ENCODE measurements at regions of chr1 and their contacts with region 1.

Region 1: DNA sequence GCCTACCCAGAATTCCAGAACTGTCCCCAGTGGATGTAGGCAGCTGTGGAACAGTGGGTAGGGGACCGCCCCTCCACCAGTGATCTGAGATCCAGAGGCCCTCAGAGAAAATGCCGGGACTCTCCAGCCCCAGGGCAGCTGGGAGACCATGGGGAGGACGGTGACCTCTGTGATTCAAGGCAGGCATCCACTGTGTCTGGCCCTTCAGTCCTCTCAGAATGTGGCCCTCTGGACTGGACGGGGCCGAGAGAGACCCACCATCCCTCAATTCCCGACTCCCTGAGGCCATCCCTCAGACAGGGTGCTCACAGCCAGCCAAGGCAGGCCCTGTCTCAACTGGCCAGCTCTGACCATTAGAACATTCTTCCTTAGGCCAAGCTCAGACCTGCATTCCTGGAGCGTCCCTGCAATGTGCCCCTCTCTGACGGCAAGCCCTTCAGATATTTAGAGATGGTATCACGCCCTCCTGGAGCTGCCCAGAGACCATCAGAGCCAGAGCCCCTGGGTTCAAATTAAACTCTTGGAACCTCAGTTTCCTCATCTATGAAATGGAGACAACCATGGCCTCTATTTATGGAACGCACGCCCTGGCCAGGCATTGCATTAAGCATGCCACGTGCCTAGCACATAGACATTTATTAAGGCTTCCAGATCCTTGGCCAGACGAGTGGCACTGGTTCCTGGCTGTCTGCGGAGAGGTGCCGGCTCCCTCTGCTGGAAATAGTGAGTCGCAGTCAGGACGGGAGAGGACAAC is 9.6 kb upstream of the EPS8L3 start:
- DNase-seq: peak; percentile 78 to 82
- H3K4me3 ChIP-seq: no peak overlapping the region
- H3K27ac ChIP-seq: no peak overlapping the region
- H3K4me1 ChIP-seq: peaks cover 46% of the 10 kb centered on the region
- H3K27me3 ChIP-seq: no peaks in the 10 kb centered on the region
- CTCF ChIP-seq: peak; percentile 97

Region 2: GRCh38 chr1:109643385-109644230 is 129.7 kb before region 1 on chr1:
- CTCF ChIA-PET with region 1: interaction called, 48 read pairs
- POLR2A ChIA-PET with region 1: no interaction called
- intact Hi-C with region 1: loop called (anchors 2 kb)
- DNase-seq: peak; percentile 78 to 85
- H3K4me3 ChIP-seq: peak overlapping the region; percentile 38; the same call in 1 of the 2 replicates
- H3K27ac ChIP-seq: no peak overlapping the region
- H3K4me1 ChIP-seq: peaks cover 10% of the 10 kb centered on the region
- H3K27me3 ChIP-seq: no peaks in the 10 kb centered on the region
- CTCF ChIP-seq: peak; percentile 96

Region 3: DNA sequence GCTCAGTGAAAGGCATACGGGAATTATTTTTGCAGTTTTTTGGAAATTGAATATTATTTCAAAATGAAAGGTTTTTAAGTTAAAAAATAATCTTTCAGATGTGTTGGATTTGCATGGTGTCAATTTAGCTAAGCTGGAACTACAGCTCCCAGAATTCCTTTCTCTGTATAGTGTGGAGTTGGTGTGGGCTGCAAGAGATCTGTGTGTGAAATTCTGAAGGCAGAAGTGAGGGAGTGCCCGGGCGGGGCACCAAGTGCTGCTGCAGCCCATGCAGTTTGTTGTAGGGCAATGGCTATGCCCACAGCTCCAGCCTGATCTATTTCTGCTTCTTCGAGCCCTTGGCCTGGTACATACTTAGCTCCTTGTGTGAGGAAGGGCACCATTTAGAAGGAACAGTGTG is 76.9 kb after region 1 on chr1:
- CTCF ChIA-PET with region 1: no interaction called
- POLR2A ChIA-PET with region 1: no interaction called
- intact Hi-C with region 1: loop called (anchors 2 kb)
- DNase-seq: no peak
- H3K4me3 ChIP-seq: no peak overlapping the region
- H3K27ac ChIP-seq: 0 out of 2 replicates have a peak overlapping the region, but pooled peaks have one; percentile 0
- H3K4me1 ChIP-seq: peaks cover 31% of the 10 kb centered on the region
- H3K27me3 ChIP-seq: no peaks in the 10 kb centered on the region
- CTCF ChIP-seq: no peak

Region 4: GRCh38 chr1:109959974-109960744 is 186.8 kb after region 1 on chr1:
- CTCF ChIA-PET with region 1: no interaction called
- POLR2A ChIA-PET with region 1: no interaction called
- intact Hi-C with region 1: no loop called
- DNase-seq: peak; percentile 59 to 99
- H3K4me3 ChIP-seq: peak overlapping the region; percentile 16; the same call in 1 of the 2 replicates
- H3K27ac ChIP-seq: peak overlapping the region; percentile 97
- H3K4me1 ChIP-seq: peaks cover 57% of the 10 kb centered on the region
- H3K27me3 ChIP-seq: no peaks in the 10 kb centered on the region
- CTCF ChIP-seq: peak; percentile 58